SK-N-SH (cell line): ENCODE measurements at regions of chr12 and their contacts with region 1.

Region 1: GRCh38 chr12:99043319-99043914 is 398.3 kb downstream of the APAF1 start:
- DNase-seq: peak; percentile 49
- H3K4me3 ChIP-seq: no peak overlapping the region; a peak in 1 of 4 replicates
- H3K27ac ChIP-seq: no peak overlapping the region
- H3K4me1 ChIP-seq: peaks cover 0 to 2% of the 10 kb centered on the region in 2 experiments; a peak in 2 of 4 replicates
- H3K27me3 ChIP-seq: no peaks in the 10 kb centered on the region
- CTCF ChIP-seq: peak; percentile 98
- EP300 ChIP-seq: no peak
- RAD21 ChIP-seq: peak; percentile 93

Region 2: GRCh38 chr12:99009654-99010296 is 33.6 kb before region 1 on chr12:
- CTCF ChIA-PET with region 1: no interaction called
- POLR2A ChIA-PET with region 1: no interaction called
- DNase-seq: no peak
- H3K4me3 ChIP-seq: no peak overlapping the region
- H3K27ac ChIP-seq: no peak overlapping the region
- H3K4me1 ChIP-seq: no peaks in the 10 kb centered on the region
- H3K27me3 ChIP-seq: no peaks in the 10 kb centered on the region
- CTCF ChIP-seq: no peak
- EP300 ChIP-seq: no peak
- RAD21 ChIP-seq: no peak

Region 3: GRCh38 chr12:99053616-99054362 is 10.4 kb after region 1 on chr12:
- CTCF ChIA-PET with region 1: interaction called, 13 read pairs
- POLR2A ChIA-PET with region 1: no interaction called
- DNase-seq: no peak
- H3K4me3 ChIP-seq: no peak overlapping the region
- H3K27ac ChIP-seq: no peak overlapping the region
- H3K4me1 ChIP-seq: no peaks in the 10 kb centered on the region
- H3K27me3 ChIP-seq: no peaks in the 10 kb centered on the region
- CTCF ChIP-seq: no peak
- EP300 ChIP-seq: no peak
- RAD21 ChIP-seq: no peak

Region 4: GRCh38 chr12:99059824-99060511 is 16.6 kb after region 1 on chr12:
- CTCF ChIA-PET with region 1: interaction called, 29 read pairs
- POLR2A ChIA-PET with region 1: no interaction called
- DNase-seq: peak; percentile 75
- H3K4me3 ChIP-seq: no peak overlapping the region
- H3K27ac ChIP-seq: peak overlapping the region; percentile 62 to 70
- H3K4me1 ChIP-seq: peaks cover 0 to 6% of the 10 kb centered on the region in 2 experiments; a peak in 2 of 4 replicates
- H3K27me3 ChIP-seq: no peaks in the 10 kb centered on the region
- CTCF ChIP-seq: peak; percentile 17; the same call in 1 of the 2 replicates
- EP300 ChIP-seq: peak in 1 of 2 experiments; percentile 65; a peak in 1 of 4 replicates
- RAD21 ChIP-seq: peak; percentile 53

Region 5: GRCh38 chr12:99619389-99620158 is 576.2 kb after region 1 on chr12:
- CTCF ChIA-PET with region 1: interaction called, 32 read pairs
- POLR2A ChIA-PET with region 1: no interaction called
- DNase-seq: peak; percentile 22
- H3K4me3 ChIP-seq: peak overlapping the region in 1 of 2 experiments; percentile 28; a peak in 1 of 4 replicates
- H3K27ac ChIP-seq: no peak overlapping the region
- H3K4me1 ChIP-seq: no peaks in the 10 kb centered on the region
- H3K27me3 ChIP-seq: no peaks in the 10 kb centered on the region
- CTCF ChIP-seq: peak; percentile 65
- EP300 ChIP-seq: no peak
- RAD21 ChIP-seq: peak; percentile 71

Region 6: GRCh38 chr12:99658671-99659349 is 615.4 kb after region 1 on chr12:
- CTCF ChIA-PET with region 1: interaction called, 24 read pairs
- POLR2A ChIA-PET with region 1: no interaction called
- DNase-seq: no peak
- H3K4me3 ChIP-seq: no peak overlapping the region
- H3K27ac ChIP-seq: no peak overlapping the region
- H3K4me1 ChIP-seq: no peaks in the 10 kb centered on the region; a peak in 1 of 4 replicates
- H3K27me3 ChIP-seq: no peaks in the 10 kb centered on the region
- CTCF ChIP-seq: peak; percentile 76
- EP300 ChIP-seq: no peak
- RAD21 ChIP-seq: peak; percentile 58

Region 7: DNA sequence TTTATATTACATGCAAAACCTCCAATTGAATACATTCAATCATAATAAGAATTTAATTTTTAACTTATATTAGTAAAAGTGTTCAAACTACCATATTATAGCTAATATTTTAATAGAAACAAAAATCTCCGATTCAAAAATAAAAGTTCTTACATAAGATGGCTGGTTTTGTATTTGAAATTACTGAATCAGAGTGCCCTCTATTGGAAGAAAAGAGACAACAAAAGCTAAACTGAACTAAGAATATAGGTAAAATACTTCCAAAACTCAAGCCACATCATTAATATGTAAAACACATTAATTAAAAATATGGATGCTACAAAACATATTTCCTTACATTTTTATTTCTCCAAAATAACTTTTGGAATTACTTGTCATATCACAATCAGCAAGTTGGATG is 724.4 kb after region 1 on chr12:
- CTCF ChIA-PET with region 1: interaction called, 37 read pairs
- POLR2A ChIA-PET with region 1: no interaction called
- DNase-seq: no peak
- H3K4me3 ChIP-seq: peak overlapping the region in 1 of 2 experiments; percentile 19; a peak in 1 of 4 replicates
- H3K27ac ChIP-seq: no peak overlapping the region
- H3K4me1 ChIP-seq: no peaks in the 10 kb centered on the region
- H3K27me3 ChIP-seq: no peaks in the 10 kb centered on the region
- CTCF ChIP-seq: peak; percentile 78
- EP300 ChIP-seq: no peak
- RAD21 ChIP-seq: peak; percentile 62